Endothelial cell of umbilical vein (primary cell): ENCODE measurements at regions of chr10 and their contacts with region 1.

Region 1: DNA sequence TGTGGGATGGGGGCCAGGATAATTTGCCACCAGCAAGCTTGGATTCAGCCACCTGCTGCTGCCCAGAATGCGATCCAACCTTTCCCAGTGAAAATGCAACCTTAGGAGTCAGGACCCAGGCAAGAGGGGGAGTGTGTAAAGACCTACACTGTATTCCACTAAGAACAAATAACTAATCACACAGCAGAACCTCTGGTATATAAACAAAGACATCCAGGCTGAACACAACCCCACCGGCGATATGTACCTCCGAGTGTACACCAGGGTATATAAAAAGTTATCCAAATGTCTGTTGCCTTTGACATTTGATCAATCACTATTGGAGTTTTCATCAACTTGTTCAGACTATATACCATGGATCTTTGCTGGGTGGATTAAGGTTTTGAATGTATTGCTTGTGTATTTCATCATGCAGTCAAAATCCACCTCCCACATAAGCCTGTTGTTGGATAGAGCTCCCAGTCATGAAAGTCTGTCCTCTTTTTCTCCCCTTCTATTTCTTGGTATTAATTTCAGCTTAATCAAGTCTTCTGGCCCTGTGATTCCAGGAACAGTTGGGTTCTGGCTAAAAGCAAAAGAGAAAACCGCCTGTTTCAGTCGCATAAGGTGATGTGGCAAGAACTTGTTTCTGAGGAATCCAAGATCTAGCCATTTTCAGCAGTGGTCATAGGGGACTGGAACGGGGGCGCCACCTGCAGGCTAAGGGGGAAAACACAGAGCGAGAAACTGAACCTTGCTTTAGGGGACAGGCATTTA is 290.7 kb downstream of the CCDC3 start:
- DNase-seq: peak; percentile 83
- H3K4me3 ChIP-seq: no peak overlapping the region
- H3K27ac ChIP-seq: no peak overlapping the region
- H3K4me1 ChIP-seq: peaks cover 53% of the 10 kb centered on the region
- H3K27me3 ChIP-seq: no peaks in the 10 kb centered on the region
- CTCF ChIP-seq: peak; percentile 91 to 95
- POLR2A ChIP-seq: no peak

Region 2: DNA sequence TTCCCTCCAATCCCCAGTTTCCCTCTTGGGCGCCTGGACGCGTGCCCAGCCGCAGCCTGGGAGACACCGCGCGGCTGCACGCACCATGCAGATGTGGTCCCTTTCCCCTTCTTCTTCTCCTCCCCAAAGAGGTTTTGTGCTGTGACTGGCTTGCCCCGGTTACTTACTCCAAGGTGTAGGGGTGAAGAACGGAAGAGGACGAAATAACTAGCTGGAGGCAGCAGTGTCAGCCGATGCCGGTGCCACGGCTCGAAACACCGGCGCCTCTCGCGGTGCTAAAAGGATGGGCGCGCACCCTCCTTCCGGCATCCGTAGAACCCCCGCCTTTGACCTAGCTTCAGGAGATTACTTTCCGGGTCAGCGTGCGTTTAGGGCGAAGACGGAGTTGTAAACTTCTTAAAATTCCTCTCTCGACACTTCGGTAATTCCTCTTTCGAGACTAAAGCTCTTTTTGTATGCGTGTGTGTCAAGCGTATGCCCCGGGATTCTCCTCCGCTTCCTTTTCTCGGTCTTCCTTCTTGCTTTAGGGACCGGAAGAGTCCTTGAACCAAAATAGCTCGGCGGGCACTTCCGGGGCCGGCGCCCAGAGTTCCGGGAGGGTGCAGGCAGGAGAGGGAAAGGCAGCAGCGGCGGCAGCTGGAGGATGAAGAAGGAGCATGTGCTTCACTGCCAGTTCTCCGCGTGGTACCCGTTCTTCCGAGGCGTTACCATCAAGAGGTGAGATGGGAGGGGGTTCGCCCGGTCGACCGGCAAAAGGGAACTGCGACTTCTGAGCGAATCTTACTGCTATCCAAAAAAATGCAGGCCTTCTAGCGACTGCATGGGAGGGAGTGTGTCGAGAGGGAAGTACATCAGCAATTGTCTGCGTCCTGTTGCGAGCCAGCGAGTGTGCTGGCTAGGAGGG is 514.9 kb before region 1 on chr10 and contains the starts of genes CDC123 and NUDT5:
- CTCF ChIA-PET with region 1: no interaction called
- POLR2A ChIA-PET with region 1: no interaction called
- dilution Hi-C with region 1: no loop called
- intact Hi-C with region 1: loop called (anchors 1 kb)
- DNase-seq: peak; percentile 85
- H3K4me3 ChIP-seq: peak within 1 kb of the TSS; percentile 72 to 95 (median 86)
- H3K27ac ChIP-seq: peak within 1 kb of the TSS; percentile 78
- H3K4me1 ChIP-seq: peaks cover 21% of the 10 kb centered on the region
- H3K27me3 ChIP-seq: no peaks in the 10 kb centered on the region
- CTCF ChIP-seq: no peak
- POLR2A ChIP-seq: no peak
- total RNA-seq, gene CDC123: 97.3 and 106 TPM in 2 replicates
- total RNA-seq, gene NUDT5: 81.8 and 89.0 TPM in 2 replicates

Region 3: GRCh38 chr10:12264204-12264940 is 446.4 kb before region 1 on chr10:
- CTCF ChIA-PET with region 1: interaction called, 98 read pairs
- POLR2A ChIA-PET with region 1: no interaction called
- dilution Hi-C with region 1: no loop called
- intact Hi-C with region 1: loop called (anchors 1 kb)
- DNase-seq: peak; percentile 73
- H3K4me3 ChIP-seq: peak overlapping the region in 2 of 3 experiments; percentile 13 to 29
- H3K27ac ChIP-seq: no peak overlapping the region
- H3K4me1 ChIP-seq: no peaks in the 10 kb centered on the region
- H3K27me3 ChIP-seq: no peaks in the 10 kb centered on the region
- CTCF ChIP-seq: peak; percentile 70 to 82
- POLR2A ChIP-seq: no peak

Region 4: DNA sequence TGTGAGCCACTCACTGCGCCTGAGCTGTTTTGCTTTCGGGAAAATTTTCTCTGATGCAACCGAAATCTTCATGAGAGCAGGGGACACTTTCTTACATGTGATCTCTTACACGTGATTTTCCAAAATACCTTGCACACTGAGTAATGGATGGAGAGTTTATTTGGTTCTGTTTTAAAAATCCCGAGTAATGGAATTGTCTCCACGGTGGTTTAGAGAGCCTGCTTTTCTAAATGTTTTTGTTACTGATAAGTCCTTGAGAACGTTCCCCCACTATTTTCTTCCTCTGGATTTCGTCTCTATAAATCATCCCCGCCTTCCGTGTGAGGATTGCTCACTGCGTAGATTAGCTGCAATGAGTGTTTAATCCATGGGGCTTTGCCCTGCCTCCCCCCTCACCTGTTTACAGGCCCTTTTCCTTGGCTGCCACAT is 335.7 kb before region 1 on chr10:
- CTCF ChIA-PET with region 1: no interaction called
- POLR2A ChIA-PET with region 1: no interaction called
- dilution Hi-C with region 1: no loop called
- intact Hi-C with region 1: no loop called
- DNase-seq: no peak
- H3K4me3 ChIP-seq: no peak overlapping the region
- H3K27ac ChIP-seq: no peak overlapping the region
- H3K4me1 ChIP-seq: no peaks in the 10 kb centered on the region
- H3K27me3 ChIP-seq: no peaks in the 10 kb centered on the region
- CTCF ChIP-seq: no peak
- POLR2A ChIP-seq: no peak

Region 5: DNA sequence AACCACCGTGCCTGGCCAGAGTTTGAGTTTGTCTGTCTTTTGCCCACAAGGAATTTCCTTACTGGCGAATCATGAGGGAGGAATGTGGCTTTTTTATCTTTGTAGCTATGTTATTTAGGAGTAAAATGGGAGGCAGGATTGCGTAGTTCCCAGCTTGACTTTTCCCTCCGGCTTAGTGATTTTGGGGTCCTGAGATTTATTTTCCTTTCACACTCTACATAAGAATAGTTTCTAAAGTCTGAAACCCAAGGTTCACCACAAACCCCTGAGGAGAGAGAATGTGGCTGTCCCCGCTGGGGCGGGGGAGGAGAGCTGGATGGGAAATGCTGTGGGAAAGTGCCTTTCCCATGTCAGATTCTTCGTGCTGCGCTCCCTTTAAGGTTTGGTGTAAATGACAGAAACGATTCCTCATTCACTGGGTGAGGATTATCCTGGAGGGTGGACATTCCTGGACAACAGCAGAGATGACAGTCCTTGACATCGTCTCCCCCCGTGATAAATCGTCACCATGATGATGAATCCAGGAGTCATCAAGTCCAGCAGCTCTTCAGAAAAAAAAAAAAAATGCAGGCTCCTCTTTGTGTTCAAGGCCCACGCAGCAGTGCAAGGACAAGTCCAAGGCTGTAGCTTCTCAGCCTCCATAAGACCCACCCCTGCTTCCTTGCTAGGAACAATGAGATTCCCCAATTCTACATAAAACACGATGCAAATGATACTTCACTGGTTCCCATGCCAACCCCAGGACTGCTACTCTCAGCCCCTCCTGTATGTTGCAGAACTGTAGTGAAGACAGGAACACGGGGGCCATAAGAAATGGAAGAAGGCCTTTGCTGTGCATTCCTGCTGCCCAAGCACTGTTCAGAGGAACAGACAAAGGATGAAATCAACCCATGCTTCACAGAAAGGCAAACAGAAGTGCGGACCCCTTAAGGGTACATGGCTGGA is 57.7 kb after region 1 on chr10:
- CTCF ChIA-PET with region 1: no interaction called
- POLR2A ChIA-PET with region 1: no interaction called
- dilution Hi-C with region 1: no loop called
- intact Hi-C with region 1: no loop called
- DNase-seq: no peak
- H3K4me3 ChIP-seq: no peak overlapping the region
- H3K27ac ChIP-seq: no peak overlapping the region
- H3K4me1 ChIP-seq: no peaks in the 10 kb centered on the region
- H3K27me3 ChIP-seq: no peaks in the 10 kb centered on the region
- CTCF ChIP-seq: no peak
- POLR2A ChIP-seq: no peak

Region 6: GRCh38 chr10:12792889-12793556 is 82.3 kb after region 1 on chr10:
- CTCF ChIA-PET with region 1: no interaction called
- POLR2A ChIA-PET with region 1: no interaction called
- dilution Hi-C with region 1: no loop called
- intact Hi-C with region 1: no loop called
- DNase-seq: no peak
- H3K4me3 ChIP-seq: no peak overlapping the region
- H3K27ac ChIP-seq: no peak overlapping the region
- H3K4me1 ChIP-seq: no peaks in the 10 kb centered on the region
- H3K27me3 ChIP-seq: no peaks in the 10 kb centered on the region
- CTCF ChIP-seq: no peak
- POLR2A ChIP-seq: no peak

Region 7: GRCh38 chr10:12844811-12845533 is 134.2 kb after region 1 on chr10:
- CTCF ChIA-PET with region 1: interaction called, 3 read pairs
- POLR2A ChIA-PET with region 1: no interaction called
- dilution Hi-C with region 1: no loop called
- intact Hi-C with region 1: loop called (anchors 1 kb)
- DNase-seq: peak; percentile 98
- H3K4me3 ChIP-seq: peak overlapping the region in 1 of 3 experiments; percentile 12
- H3K27ac ChIP-seq: peak overlapping the region; percentile 96
- H3K4me1 ChIP-seq: peaks cover 31% of the 10 kb centered on the region
- H3K27me3 ChIP-seq: no peaks in the 10 kb centered on the region
- CTCF ChIP-seq: no peak
- POLR2A ChIP-seq: peak; percentile 56

Region 8: GRCh38 chr10:13056456-13057077 is 345.8 kb after region 1 on chr10:
- CTCF ChIA-PET with region 1: interaction called, 22 read pairs
- POLR2A ChIA-PET with region 1: no interaction called
- dilution Hi-C with region 1: no loop called
- intact Hi-C with region 1: no loop called
- DNase-seq: peak; percentile 22
- H3K4me3 ChIP-seq: no peak overlapping the region
- H3K27ac ChIP-seq: no peak overlapping the region
- H3K4me1 ChIP-seq: no peaks in the 10 kb centered on the region
- H3K27me3 ChIP-seq: no peaks in the 10 kb centered on the region
- CTCF ChIP-seq: peak; percentile 15 to 38
- POLR2A ChIP-seq: no peak

Region 9: GRCh38 chr10:13146383-13146782 is 435.6 kb after region 1 on chr10:
- CTCF ChIA-PET with region 1: no interaction called
- POLR2A ChIA-PET with region 1: no interaction called
- dilution Hi-C with region 1: no loop called
- intact Hi-C with region 1: no loop called
- DNase-seq: no peak
- H3K4me3 ChIP-seq: no peak overlapping the region
- H3K27ac ChIP-seq: no peak overlapping the region
- H3K4me1 ChIP-seq: no peaks in the 10 kb centered on the region
- H3K27me3 ChIP-seq: no peaks in the 10 kb centered on the region
- CTCF ChIP-seq: no peak
- POLR2A ChIP-seq: no peak